CD8-positive, alpha-beta T cell (primary cell): ENCODE measurements at regions of chr20 and their contacts with region 1.

Region 1: GRCh38 chr20:45890985-45891983 is at the starts of genes CTSA and NEURL2:
- DNase-seq: peak; percentile 53 to 91 (median 84)
- ATAC-seq: peak; percentile 70
- H3K4me3 ChIP-seq: peak within 1 kb of the TSS; percentile 89 to 99
- H3K4me3 Mint-ChIP-seq: peak within 1 kb of the TSS; percentile 93
- H3K27ac ChIP-seq: peak within 1 kb of the TSS; percentile 46 to 60
- H3K27ac Mint-ChIP-seq: peak within 1 kb of the TSS; percentile 90
- H3K4me1 ChIP-seq: peaks cover 24% of the 10 kb centered on the region
- H3K4me1 Mint-ChIP-seq: peaks cover 35% of the 10 kb centered on the region
- H3K27me3 ChIP-seq: no peaks in the 10 kb centered on the region
- H3K27me3 Mint-ChIP-seq: no peaks in the 10 kb centered on the region
- CTCF ChIP-seq: no peak
- total RNA-seq, gene CTSA: 52.8 to 64.2 TPM
- total RNA-seq, gene NEURL2: 1.6 to 1.7 TPM

Region 2: DNA sequence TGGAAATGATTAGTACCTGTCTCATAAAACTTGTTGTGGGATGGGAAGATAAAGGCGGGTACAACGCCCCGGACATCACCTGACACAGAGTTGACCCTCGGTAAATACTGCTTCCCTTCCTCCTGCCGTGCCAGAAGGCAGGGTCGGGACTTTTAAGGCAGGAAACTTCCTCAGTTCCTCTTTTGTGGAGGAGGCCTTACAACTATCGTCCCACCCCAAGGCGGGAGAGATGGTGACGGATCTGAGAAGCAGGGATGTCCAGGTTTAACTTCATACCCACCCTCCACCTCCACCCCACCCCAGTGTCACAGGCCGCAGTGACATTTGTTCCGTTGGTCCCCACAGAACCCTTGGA is 99.0 kb before region 1 on chr20:
- CTCF ChIA-PET with region 1: interaction called, 3 read pairs
- POLR2A ChIA-PET with region 1: no interaction called
- intact Hi-C with region 1: loop called in 1 of 2 experiments (anchors 5 kb)
- DNase-seq: peak in 3 of 9 experiments; percentile 8 to 20 (median 12)
- ATAC-seq: peak; percentile 10
- H3K4me3 ChIP-seq: peak overlapping the region; percentile 82 to 100
- H3K4me3 Mint-ChIP-seq: peak overlapping the region; percentile 93
- H3K27ac ChIP-seq: peak overlapping the region; percentile 87 to 96
- H3K27ac Mint-ChIP-seq: peak overlapping the region; percentile 93
- H3K4me1 ChIP-seq: peaks cover 16% of the 10 kb centered on the region
- H3K4me1 Mint-ChIP-seq: peaks cover 19% of the 10 kb centered on the region
- H3K27me3 ChIP-seq: no peaks in the 10 kb centered on the region
- H3K27me3 Mint-ChIP-seq: no peaks in the 10 kb centered on the region
- CTCF ChIP-seq: no peak

Region 3: GRCh38 chr20:45812157-45813020 is 78.9 kb before region 1 on chr20 and contains the start of gene UBE2C:
- CTCF ChIA-PET with region 1: interaction called, 7 read pairs
- POLR2A ChIA-PET with region 1: no interaction called
- intact Hi-C with region 1: loop called (anchors 1 to 5 kb)
- DNase-seq: peak; percentile 87 to 98 (median 92)
- ATAC-seq: peak; percentile 99
- H3K4me3 ChIP-seq: peak within 1 kb of the TSS; percentile 62 to 67
- H3K4me3 Mint-ChIP-seq: peak within 1 kb of the TSS; percentile 80
- H3K27ac ChIP-seq: peak within 1 kb of the TSS in 1 of 2 experiments; percentile 51
- H3K27ac Mint-ChIP-seq: peak within 1 kb of the TSS; percentile 77
- H3K4me1 ChIP-seq: peaks cover 10% of the 10 kb centered on the region
- H3K4me1 Mint-ChIP-seq: peaks cover 10% of the 10 kb centered on the region
- H3K27me3 ChIP-seq: no peaks in the 10 kb centered on the region
- H3K27me3 Mint-ChIP-seq: no peaks in the 10 kb centered on the region
- CTCF ChIP-seq: no peak
- total RNA-seq, gene UBE2C: 0.60 TPM in 1 of 2 experiments, not detected in the other

Region 4: GRCh38 chr20:45880988-45881788 is 10.1 kb before region 1 on chr20 and contains the start of gene ZSWIM1:
- CTCF ChIA-PET with region 1: interaction called, 6 read pairs
- POLR2A ChIA-PET with region 1: interaction called, 32 read pairs
- intact Hi-C with region 1: loop called (anchors 1 kb)
- DNase-seq: peak; percentile 96 to 100 (median 99)
- ATAC-seq: peak; percentile 97
- H3K4me3 ChIP-seq: peak within 1 kb of the TSS; percentile 71 to 82
- H3K4me3 Mint-ChIP-seq: peak within 1 kb of the TSS; percentile 91
- H3K27ac ChIP-seq: peak within 1 kb of the TSS; percentile 75 to 87
- H3K27ac Mint-ChIP-seq: peak within 1 kb of the TSS; percentile 96
- H3K4me1 ChIP-seq: peaks cover 18% of the 10 kb centered on the region
- H3K4me1 Mint-ChIP-seq: peaks cover 40% of the 10 kb centered on the region
- H3K27me3 ChIP-seq: no peaks in the 10 kb centered on the region
- H3K27me3 Mint-ChIP-seq: no peaks in the 10 kb centered on the region
- CTCF ChIP-seq: no peak
- total RNA-seq, gene ZSWIM1: 8.5 to 9.2 TPM

Region 5: DNA sequence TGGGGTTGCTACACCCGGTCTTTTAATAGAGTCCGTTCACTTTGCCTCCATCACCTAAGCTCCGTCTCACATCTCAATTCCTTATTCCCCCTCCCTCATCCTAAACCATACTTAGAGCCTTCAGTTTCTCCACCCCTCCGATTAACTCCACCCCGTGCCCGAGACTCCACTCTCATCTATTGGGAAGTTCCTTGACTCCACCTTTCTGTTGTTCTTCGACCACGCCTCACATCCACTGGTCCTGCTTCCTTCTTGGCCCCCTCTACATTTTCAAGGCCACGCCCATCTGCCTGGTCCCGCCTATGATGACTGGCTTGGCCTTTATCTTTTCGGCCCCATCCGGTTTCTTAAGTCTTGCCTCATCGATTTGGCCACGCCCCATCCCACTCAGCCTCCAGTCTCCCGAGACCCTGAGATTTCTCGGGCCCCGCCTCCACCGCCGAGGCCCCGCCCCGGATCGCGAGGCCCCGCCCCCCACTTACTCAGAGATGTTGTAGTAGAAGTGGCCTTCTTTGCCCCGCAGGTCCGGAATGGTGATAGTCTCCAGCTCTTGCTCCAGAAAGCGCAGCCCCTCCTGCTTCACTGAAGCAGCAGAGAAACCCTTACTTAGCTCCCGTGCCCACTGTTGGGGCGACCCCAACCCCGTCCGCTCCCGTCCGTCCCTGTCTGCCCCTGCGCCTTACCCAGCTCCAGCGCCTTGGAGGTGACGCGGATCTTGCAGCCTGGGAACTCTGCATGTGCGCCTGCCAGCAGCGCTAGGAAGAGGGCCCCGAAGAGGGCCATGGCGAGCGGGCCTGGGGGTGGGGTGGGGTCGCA is 19.6 kb after region 1 on chr20:
- CTCF ChIA-PET with region 1: interaction called, 5 read pairs
- POLR2A ChIA-PET with region 1: interaction called, 7 read pairs
- intact Hi-C with region 1: loop called (anchors 1 kb)
- DNase-seq: peak; percentile 78 to 93 (median 88)
- ATAC-seq: peak; percentile 95
- H3K4me3 ChIP-seq: peak overlapping the region; percentile 53 to 75
- H3K4me3 Mint-ChIP-seq: peak overlapping the region; percentile 89
- H3K27ac ChIP-seq: no peak overlapping the region
- H3K27ac Mint-ChIP-seq: peak overlapping the region; percentile 14
- H3K4me1 ChIP-seq: peaks cover 17% of the 10 kb centered on the region
- H3K4me1 Mint-ChIP-seq: peaks cover 16% of the 10 kb centered on the region
- H3K27me3 ChIP-seq: peaks cover 0 to 5% of the 10 kb centered on the region in 2 experiments
- H3K27me3 Mint-ChIP-seq: peaks cover 15% of the 10 kb centered on the region
- CTCF ChIP-seq: no peak

Region 6: GRCh38 chr20:46468509-46468908 is 577.2 kb after region 1 on chr20:
- CTCF ChIA-PET with region 1: no interaction called
- POLR2A ChIA-PET with region 1: no interaction called
- intact Hi-C with region 1: no loop called
- DNase-seq: no peak
- ATAC-seq: no peak
- H3K4me3 ChIP-seq: no peak overlapping the region
- H3K4me3 Mint-ChIP-seq: no peak overlapping the region
- H3K27ac ChIP-seq: no peak overlapping the region
- H3K27ac Mint-ChIP-seq: no peak overlapping the region
- H3K4me1 ChIP-seq: no peaks in the 10 kb centered on the region
- H3K4me1 Mint-ChIP-seq: no peaks in the 10 kb centered on the region
- H3K27me3 ChIP-seq: no peaks in the 10 kb centered on the region
- H3K27me3 Mint-ChIP-seq: peaks cover 28% of the 10 kb centered on the region
- CTCF ChIP-seq: no peak